CD4-positive, alpha-beta memory T cell (primary cell): ENCODE measurements at regions of chr19 and their contacts with region 1.

Region 1: GRCh38 chr19:55212447-55212846 is 3.1 kb upstream of the PTPRH start:
- DNase-seq: peak in 4 of 5 donors; percentile 12 to 21 (median 16)
- H3K4me3 ChIP-seq: no peak overlapping the region
- H3K4me3 Mint-ChIP-seq: no peak overlapping the region
- H3K27ac ChIP-seq: no peak overlapping the region
- H3K27ac Mint-ChIP-seq: no peak overlapping the region
- H3K4me1 ChIP-seq: peaks cover 11% of the 10 kb centered on the region
- H3K4me1 Mint-ChIP-seq: peaks cover 3 to 16% (median 6%) of the 10 kb centered on the region in 4 donors
- H3K27me3 ChIP-seq: no peaks in the 10 kb centered on the region
- H3K27me3 Mint-ChIP-seq: peaks cover 21 to 32% of the 10 kb centered on the region in 2 donors

Region 2: GRCh38 chr19:55166530-55167268 is 45.7 kb before region 1 on chr19 and contains the start of gene DNAAF3:
- CTCF ChIA-PET with region 1: no interaction called
- POLR2A ChIA-PET with region 1: no interaction called
- intact Hi-C with region 1: no loop called
- DNase-seq: peak; percentile 36 to 58 (median 57)
- H3K4me3 ChIP-seq: no peak within 1 kb of the TSS
- H3K4me3 Mint-ChIP-seq: peak within 1 kb of the TSS; percentile 15 to 86 (median 56)
- H3K27ac ChIP-seq: no peak within 1 kb of the TSS
- H3K27ac Mint-ChIP-seq: peak within 1 kb of the TSS in 6 of 7 donors; percentile 53 to 80 (median 71)
- H3K4me1 ChIP-seq: peaks cover 14% of the 10 kb centered on the region
- H3K4me1 Mint-ChIP-seq: peaks cover 10 to 19% (median 10%) of the 10 kb centered on the region in 4 donors
- H3K27me3 ChIP-seq: peaks cover 26% of the 10 kb centered on the region
- H3K27me3 Mint-ChIP-seq: peaks cover 44 to 58% of the 10 kb centered on the region in 2 donors
- total RNA-seq, gene DNAAF3: not detected

Region 3: GRCh38 chr19:55418185-55418584 is 205.7 kb after region 1 on chr19:
- CTCF ChIA-PET with region 1: no interaction called
- POLR2A ChIA-PET with region 1: no interaction called
- intact Hi-C with region 1: loop called (anchors 1 kb)
- DNase-seq: peak; percentile 54 to 61 (median 60)
- H3K4me3 ChIP-seq: no peak overlapping the region
- H3K4me3 Mint-ChIP-seq: no peak overlapping the region
- H3K27ac ChIP-seq: no peak overlapping the region
- H3K27ac Mint-ChIP-seq: peak overlapping the region in 3 of 7 donors; percentile 48 to 74 (median 68)
- H3K4me1 ChIP-seq: peaks cover 25% of the 10 kb centered on the region
- H3K4me1 Mint-ChIP-seq: peaks cover 9 to 29% (median 20%) of the 10 kb centered on the region in 4 donors
- H3K27me3 ChIP-seq: no peaks in the 10 kb centered on the region
- H3K27me3 Mint-ChIP-seq: peaks cover 0 to 3% of the 10 kb centered on the region in 2 donors